A549 (cell line): ENCODE measurements at regions of chr12 and their contacts with region 1.

Region 1: GRCh38 chr12:74317078-74317601 is 220.5 kb upstream of the ATXN7L3B start:
- DNase-seq: peak; percentile 15 to 75
- ATAC-seq: peak; percentile 99 to 100
- H3K4me3 ChIP-seq: no peak overlapping the region
- H3K27ac ChIP-seq: peak overlapping the region; percentile 68 to 76
- H3K4me1 ChIP-seq: peaks cover 25% of the 10 kb centered on the region
- CTCF ChIP-seq: peak; percentile 69
- EP300 ChIP-seq: no peak; a peak in 1 of 5 replicates
- POLR2A ChIP-seq: no peak
- RAD21 ChIP-seq: peak; percentile 84 to 86

Region 2: DNA sequence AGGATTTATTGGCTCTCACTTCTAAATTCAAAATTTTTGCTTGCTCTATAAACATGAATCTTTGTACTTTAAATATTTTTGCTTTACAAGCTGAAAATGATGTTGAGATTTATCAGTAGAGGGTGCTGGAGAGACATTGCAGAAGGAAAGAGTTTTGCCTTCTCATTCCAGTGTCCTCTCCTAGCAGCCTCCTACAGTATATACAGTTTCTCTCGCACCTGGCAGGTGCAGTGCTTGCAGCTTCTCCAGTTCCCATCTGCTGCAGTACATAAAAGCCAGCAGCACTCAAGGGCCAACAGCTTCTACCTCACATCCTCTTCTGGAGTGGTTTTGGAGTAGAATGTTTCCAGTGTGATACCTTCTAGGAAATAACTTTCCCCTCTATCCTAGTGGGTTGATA is 381.3 kb before region 1 on chr12:
- CTCF ChIA-PET with region 1: interaction called, 19 read pairs
- POLR2A ChIA-PET with region 1: no interaction called
- DNase-seq: peak in 1 of 2 experiments; percentile 55
- ATAC-seq: peak; percentile 83 to 86
- H3K4me3 ChIP-seq: no peak overlapping the region
- H3K27ac ChIP-seq: no peak overlapping the region
- H3K4me1 ChIP-seq: no peaks in the 10 kb centered on the region
- CTCF ChIP-seq: peak; percentile 80
- EP300 ChIP-seq: no peak
- POLR2A ChIP-seq: no peak
- RAD21 ChIP-seq: peak; percentile 74 to 79

Region 3: DNA sequence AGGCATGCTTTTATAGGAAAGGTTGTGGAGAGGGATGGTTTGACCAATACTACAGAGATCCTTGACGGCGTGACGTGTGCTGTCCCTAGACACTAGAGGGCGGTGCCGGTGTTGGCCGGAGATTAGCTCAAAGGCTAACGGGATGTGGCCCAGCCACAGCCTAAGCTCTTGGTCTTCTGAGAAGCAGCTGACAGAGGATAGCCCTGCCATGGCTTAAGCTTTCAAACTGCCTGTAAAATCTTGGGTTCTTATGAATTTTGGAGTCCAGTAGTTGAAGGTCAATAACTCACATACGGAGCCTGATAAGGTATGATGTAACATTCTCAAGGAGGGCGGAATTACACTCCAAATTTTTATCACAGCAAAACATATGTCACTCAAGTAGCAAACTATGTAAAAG is 295.2 kb before region 1 on chr12:
- CTCF ChIA-PET with region 1: interaction called, 14 read pairs
- POLR2A ChIA-PET with region 1: no interaction called
- DNase-seq: peak; percentile 22 to 92
- ATAC-seq: peak; percentile 100
- H3K4me3 ChIP-seq: no peak overlapping the region
- H3K27ac ChIP-seq: peak overlapping the region; percentile 42 to 79
- H3K4me1 ChIP-seq: peaks cover 14% of the 10 kb centered on the region; the same call in 2 of the 3 replicates
- CTCF ChIP-seq: peak; percentile 80
- EP300 ChIP-seq: no peak
- POLR2A ChIP-seq: no peak
- RAD21 ChIP-seq: peak; percentile 89 to 94

Region 4: DNA sequence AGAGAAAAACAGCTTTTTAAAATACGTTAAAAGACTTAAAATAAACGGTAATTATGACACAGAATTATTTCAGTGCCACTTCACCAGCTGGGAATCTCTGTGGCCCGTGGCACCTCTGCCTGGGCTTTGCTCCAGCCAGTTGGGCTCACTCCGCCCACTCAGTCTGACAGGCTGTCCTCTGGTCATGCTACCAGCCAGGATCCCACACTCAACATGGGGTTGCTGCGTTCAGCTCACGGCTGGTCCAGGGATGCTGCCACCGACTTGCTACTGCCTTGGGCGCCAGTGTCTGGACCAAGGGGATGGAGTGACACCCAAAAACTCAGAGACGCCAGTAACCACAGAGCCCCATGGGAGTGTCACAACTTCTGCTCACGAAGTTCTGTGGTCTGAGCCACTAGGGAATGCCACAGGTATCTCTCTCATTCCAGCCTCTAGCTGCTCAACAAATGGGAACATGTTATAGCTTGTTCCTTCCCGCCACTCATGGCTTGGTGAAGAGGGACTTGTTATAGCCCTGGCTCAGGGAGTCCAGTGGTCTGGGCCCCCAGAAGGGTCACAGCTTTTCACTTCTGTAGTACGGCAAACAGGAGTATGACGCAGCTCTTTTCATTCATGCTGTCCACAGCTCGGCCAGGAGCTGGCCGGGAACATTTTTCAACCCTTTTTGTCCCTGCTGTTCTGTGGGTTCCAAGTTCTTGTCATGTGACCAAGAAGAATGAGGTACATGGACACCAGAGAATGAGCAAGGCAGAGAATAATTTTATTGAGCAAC is 197.1 kb after region 1 on chr12:
- CTCF ChIA-PET with region 1: no interaction called
- POLR2A ChIA-PET with region 1: no interaction called
- DNase-seq: no peak
- ATAC-seq: no peak
- H3K4me3 ChIP-seq: no peak overlapping the region
- H3K27ac ChIP-seq: no peak overlapping the region
- H3K4me1 ChIP-seq: no peaks in the 10 kb centered on the region
- CTCF ChIP-seq: no peak
- EP300 ChIP-seq: no peak
- POLR2A ChIP-seq: no peak
- RAD21 ChIP-seq: no peak

Region 5: DNA sequence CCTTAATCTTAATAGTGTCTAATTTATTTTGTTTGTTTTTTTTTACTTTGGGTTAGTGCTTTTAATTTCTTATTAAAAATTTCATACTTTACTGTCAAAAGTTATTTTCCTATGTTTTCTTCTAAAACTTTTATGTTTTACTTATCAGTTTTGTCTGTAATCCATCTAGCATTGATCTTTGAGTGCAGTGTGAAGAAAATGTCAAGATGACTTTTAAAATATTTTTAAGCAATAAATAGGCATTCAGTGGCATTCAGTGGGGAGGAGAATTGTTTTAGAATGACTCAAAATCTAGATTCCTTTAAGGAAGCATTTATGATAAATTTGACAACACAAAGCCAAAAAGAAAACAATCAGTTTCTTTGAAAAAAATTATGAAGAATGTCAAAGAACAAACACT is 545.4 kb after region 1 on chr12:
- CTCF ChIA-PET with region 1: no interaction called
- POLR2A ChIA-PET with region 1: no interaction called
- DNase-seq: no peak
- ATAC-seq: no peak
- H3K4me3 ChIP-seq: no peak overlapping the region
- H3K27ac ChIP-seq: no peak overlapping the region
- H3K4me1 ChIP-seq: peaks cover 8% of the 10 kb centered on the region; the same call in 1 of the 3 replicates
- CTCF ChIP-seq: no peak
- EP300 ChIP-seq: no peak
- POLR2A ChIP-seq: no peak
- RAD21 ChIP-seq: no peak